ENCODE measurements at regions of chr9 and their contacts with region 1.

Region 1: DNA sequence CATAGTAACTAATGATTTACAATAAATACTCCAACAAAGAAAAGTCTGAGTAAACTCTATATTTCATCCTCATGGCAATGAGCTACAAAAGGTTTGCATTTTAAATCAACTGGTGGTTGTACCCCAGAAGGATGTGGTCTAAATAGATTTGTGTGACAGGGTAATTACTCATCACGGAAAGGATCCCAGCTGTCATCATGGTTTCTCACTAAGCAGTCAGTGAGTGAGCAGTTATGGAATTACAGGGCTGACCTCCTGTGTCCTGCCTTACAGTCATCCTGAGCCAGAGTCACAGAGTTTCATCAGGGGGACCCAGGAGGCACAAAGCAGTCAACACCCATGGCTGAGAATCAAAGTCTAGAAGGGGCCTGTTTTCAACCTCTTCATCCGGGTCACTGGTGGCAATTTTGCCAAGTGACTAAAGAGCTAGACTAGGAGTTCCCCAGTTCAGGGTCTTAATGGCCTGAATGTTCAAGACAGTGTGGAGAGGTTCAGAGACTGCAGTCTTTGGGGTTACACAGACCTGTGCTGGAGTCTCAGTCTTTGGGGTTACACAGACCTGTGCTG is 210.7 kb upstream of the SLC24A2 start:
- DNase-seq: peak; percentile 85
- H3K4me3 Mint-ChIP-seq: no peak overlapping the region
- H3K27ac Mint-ChIP-seq: peak overlapping the region; percentile 85
- H3K4me1 Mint-ChIP-seq: peaks cover 43% of the 10 kb centered on the region
- H3K27me3 Mint-ChIP-seq: no peaks in the 10 kb centered on the region

Region 2: GRCh38 chr9:19925817-19926503 is 73.6 kb before region 1 on chr9:
- CTCF ChIA-PET with region 1: interaction called, 3 read pairs
- intact Hi-C with region 1: loop called (anchors 1 kb)
- DNase-seq: peak; percentile 90
- H3K4me3 Mint-ChIP-seq: peak overlapping the region; percentile 57
- H3K27ac Mint-ChIP-seq: no peak overlapping the region
- H3K4me1 Mint-ChIP-seq: peaks cover 18% of the 10 kb centered on the region
- H3K27me3 Mint-ChIP-seq: peaks cover 2% of the 10 kb centered on the region

Region 3: GRCh38 chr9:20242510-20243189 is 243.1 kb after region 1 on chr9:
- CTCF ChIA-PET with region 1: no interaction called
- intact Hi-C with region 1: loop called (anchors 1 kb)
- DNase-seq: peak; percentile 52
- H3K4me3 Mint-ChIP-seq: no peak overlapping the region
- H3K27ac Mint-ChIP-seq: no peak overlapping the region
- H3K4me1 Mint-ChIP-seq: peaks cover 60% of the 10 kb centered on the region
- H3K27me3 Mint-ChIP-seq: no peaks in the 10 kb centered on the region

Region 4: GRCh38 chr9:20508242-20508641 is 508.7 kb after region 1 on chr9:
- CTCF ChIA-PET with region 1: no interaction called
- intact Hi-C with region 1: loop called (anchors 2 kb)
- DNase-seq: no peak
- H3K4me3 Mint-ChIP-seq: peak overlapping the region; percentile 40
- H3K27ac Mint-ChIP-seq: peak overlapping the region; percentile 13
- H3K4me1 Mint-ChIP-seq: peaks cover 80% of the 10 kb centered on the region
- H3K27me3 Mint-ChIP-seq: no peaks in the 10 kb centered on the region

Region 5: DNA sequence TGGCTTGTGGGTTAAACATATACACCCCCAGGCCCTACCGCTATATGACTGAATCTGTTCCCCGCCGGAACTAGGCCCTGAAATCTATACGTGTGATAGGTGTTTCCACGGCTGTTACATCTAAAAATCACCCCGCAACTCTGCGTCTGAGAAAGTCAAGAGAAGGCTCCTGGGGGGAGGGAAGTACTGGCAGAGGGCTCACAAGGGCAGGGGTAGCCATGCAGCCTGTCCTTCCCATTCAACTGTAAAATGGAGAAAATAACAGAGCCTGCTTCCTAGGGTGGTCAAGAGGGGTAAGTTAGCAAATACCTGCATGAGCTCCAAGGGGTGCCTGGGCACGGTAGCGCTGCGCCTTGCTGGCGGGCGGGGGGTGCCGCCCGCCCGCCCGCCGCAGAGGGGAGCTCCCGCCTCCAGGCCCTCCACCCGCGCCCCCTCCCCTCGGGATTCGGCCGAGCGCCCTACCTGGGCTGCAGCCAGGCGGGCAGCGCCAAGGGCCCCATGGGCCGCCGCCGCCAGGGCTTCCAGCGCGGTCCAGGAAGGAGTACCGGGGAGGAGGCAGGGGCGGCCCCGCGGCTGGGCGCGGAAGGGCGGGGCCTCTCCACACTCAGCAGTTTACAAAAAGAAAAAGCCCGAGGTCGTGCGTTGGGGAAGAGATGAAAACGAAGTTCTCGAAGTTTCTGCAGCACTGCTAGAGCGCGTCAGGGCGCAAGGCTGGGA is 1031.7 kb after region 1 on chr9 and contains the start of gene HACD4:
- CTCF ChIA-PET with region 1: no interaction called
- intact Hi-C with region 1: loop called (anchors 1 kb)
- DNase-seq: peak; percentile 78
- H3K4me3 Mint-ChIP-seq: peak within 1 kb of the TSS; percentile 49
- H3K27ac Mint-ChIP-seq: peak within 1 kb of the TSS; percentile 69
- H3K4me1 Mint-ChIP-seq: peaks cover 25% of the 10 kb centered on the region
- H3K27me3 Mint-ChIP-seq: no peaks in the 10 kb centered on the region
- total RNA-seq, gene HACD4: 1.1 to 1.6 TPM